IMR-90 (cell line): ENCODE measurements at regions of chr5 and their contacts with region 1.

Region 1: GRCh38 chr5:81740758-81741157 is 10.1 kb downstream of the SSBP2 start:
- DNase-seq: no peak
- ATAC-seq: no peak
- H3K4me3 ChIP-seq: no peak overlapping the region
- H3K27ac ChIP-seq: no peak overlapping the region
- H3K4me1 ChIP-seq: peaks cover 2% of the 10 kb centered on the region; the same call in 1 of the 2 replicates
- H3K27me3 ChIP-seq: no peaks in the 10 kb centered on the region
- CTCF ChIP-seq: no peak
- POLR2A ChIP-seq: no peak
- RAD21 ChIP-seq: no peak

Region 2: GRCh38 chr5:81639556-81639955 is 101.2 kb before region 1 on chr5:
- CTCF ChIA-PET with region 1: no interaction called
- POLR2A ChIA-PET with region 1: no interaction called
- dilution Hi-C with region 1: no loop called
- in situ Hi-C with region 1: no loop called
- intact Hi-C with region 1: loop called (anchors 5 kb)
- DNase-seq: peak; percentile 33
- ATAC-seq: peak; percentile 77
- H3K4me3 ChIP-seq: no peak overlapping the region
- H3K27ac ChIP-seq: peak overlapping the region; percentile 25; the same call in 1 of the 2 replicates
- H3K4me1 ChIP-seq: peaks cover 3% of the 10 kb centered on the region; the same call in 1 of the 2 replicates
- H3K27me3 ChIP-seq: no peaks in the 10 kb centered on the region
- CTCF ChIP-seq: no peak
- POLR2A ChIP-seq: no peak
- RAD21 ChIP-seq: no peak